Activated CD4-positive, alpha-beta T cell treated with anti-CD3 and anti-CD28 coated beads for 36 hours (primary cell): ENCODE measurements at regions of chr16 and their contacts with region 1.

Region 1: GRCh38 chr16:48623304-48624016 is 13.5 kb upstream of the N4BP1 start:
- DNase-seq: peak; percentile 90
- ATAC-seq: peak; percentile 97
- H3K4me3 Mint-ChIP-seq: peak overlapping the region; percentile 68
- H3K27ac Mint-ChIP-seq: peak overlapping the region; percentile 77
- H3K4me1 Mint-ChIP-seq: peaks cover 19% of the 10 kb centered on the region
- H3K27me3 Mint-ChIP-seq: no peaks in the 10 kb centered on the region

Region 2: GRCh38 chr16:48231727-48232492 is 391.6 kb before region 1 on chr16:
- CTCF ChIA-PET with region 1: interaction called, 12 read pairs
- POLR2A ChIA-PET with region 1: no interaction called
- intact Hi-C with region 1: loop called in 1 of 2 experiments (anchors 2 kb)
- DNase-seq: peak; percentile 72
- ATAC-seq: peak; percentile 83
- H3K4me3 Mint-ChIP-seq: peak overlapping the region; percentile 20
- H3K27ac Mint-ChIP-seq: peak overlapping the region; percentile 65
- H3K4me1 Mint-ChIP-seq: peaks cover 22% of the 10 kb centered on the region
- H3K27me3 Mint-ChIP-seq: peaks cover 5% of the 10 kb centered on the region

Region 3: GRCh38 chr16:48365581-48366164 is 257.8 kb before region 1 on chr16:
- CTCF ChIA-PET with region 1: interaction called, 25 read pairs
- POLR2A ChIA-PET with region 1: no interaction called
- intact Hi-C with region 1: loop called in 1 of 2 experiments (anchors 5 kb)
- DNase-seq: peak; percentile 93
- ATAC-seq: peak; percentile 96
- H3K4me3 Mint-ChIP-seq: peak overlapping the region; percentile 90
- H3K27ac Mint-ChIP-seq: peak overlapping the region; percentile 99
- H3K4me1 Mint-ChIP-seq: peaks cover 56% of the 10 kb centered on the region
- H3K27me3 Mint-ChIP-seq: no peaks in the 10 kb centered on the region

Region 4: DNA sequence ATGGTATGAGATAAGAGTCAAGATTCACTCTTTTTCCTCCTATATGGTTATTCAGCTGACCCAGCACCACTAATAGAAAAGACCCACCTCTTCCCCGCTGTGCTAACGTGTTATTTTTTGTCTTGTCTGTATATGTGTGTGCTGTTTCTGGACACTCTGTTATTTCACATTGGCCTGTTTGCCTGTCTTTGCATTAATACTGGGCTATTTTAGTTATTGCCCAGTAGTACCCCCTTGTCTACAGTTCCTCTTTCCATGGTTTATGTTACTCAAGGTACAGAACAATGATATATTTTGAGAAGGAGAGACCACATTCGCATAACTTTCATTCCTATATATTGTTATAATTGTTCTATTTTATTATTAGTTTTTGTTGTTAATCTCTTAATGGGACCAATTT is 164.3 kb before region 1 on chr16:
- CTCF ChIA-PET with region 1: interaction called, 8 read pairs
- POLR2A ChIA-PET with region 1: no interaction called
- intact Hi-C with region 1: loop called in 1 of 2 experiments (anchors 5 kb)
- DNase-seq: no peak
- ATAC-seq: no peak
- H3K4me3 Mint-ChIP-seq: no peak overlapping the region
- H3K27ac Mint-ChIP-seq: no peak overlapping the region
- H3K4me1 Mint-ChIP-seq: peaks cover 9% of the 10 kb centered on the region
- H3K27me3 Mint-ChIP-seq: peaks cover 35% of the 10 kb centered on the region

Region 5: DNA sequence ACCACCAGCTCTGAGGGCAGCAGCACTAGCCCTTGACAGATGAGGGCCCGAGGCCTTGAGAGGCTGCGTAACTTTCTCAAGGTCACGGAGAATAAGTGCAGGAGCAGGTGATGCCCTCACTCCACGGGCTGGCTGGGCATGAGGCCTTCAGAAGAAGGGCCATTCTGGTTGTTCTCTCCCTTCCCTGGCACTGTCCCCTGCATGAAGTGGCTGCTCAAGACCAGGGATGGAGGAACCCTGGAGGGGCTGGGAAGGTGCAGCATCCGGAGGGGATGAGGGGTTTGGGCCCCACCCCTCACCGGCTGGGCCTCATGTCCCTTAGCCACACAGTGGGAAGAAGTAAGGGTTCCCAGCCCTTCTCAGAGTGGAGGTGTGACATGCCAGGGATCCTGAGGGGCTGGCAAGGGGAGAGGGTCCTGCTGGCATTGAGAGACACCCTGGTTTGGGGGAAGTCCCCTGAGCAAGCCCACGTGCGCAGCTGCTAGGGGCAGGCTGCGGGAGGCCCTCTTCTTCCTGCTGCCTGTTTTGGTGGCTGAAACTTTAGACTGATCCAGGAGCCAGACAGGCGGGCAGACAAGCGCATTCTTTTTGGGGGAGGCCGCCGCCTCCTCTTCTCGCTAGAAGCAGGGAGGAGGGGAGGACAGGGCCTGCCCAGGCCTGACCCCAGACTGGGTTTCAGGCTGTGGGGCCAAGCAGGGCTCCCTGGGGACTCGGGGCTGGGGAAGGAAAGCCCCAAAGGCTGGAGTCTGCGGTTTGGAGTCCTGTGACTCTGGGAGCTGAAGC is 87.4 kb before region 1 on chr16:
- CTCF ChIA-PET with region 1: interaction called, 23 read pairs
- POLR2A ChIA-PET with region 1: no interaction called
- intact Hi-C with region 1: loop called in 1 of 2 experiments (anchors 5 kb)
- DNase-seq: peak; percentile 40
- ATAC-seq: peak; percentile 43
- H3K4me3 Mint-ChIP-seq: no peak overlapping the region
- H3K27ac Mint-ChIP-seq: no peak overlapping the region
- H3K4me1 Mint-ChIP-seq: peaks cover 16% of the 10 kb centered on the region
- H3K27me3 Mint-ChIP-seq: no peaks in the 10 kb centered on the region

Region 6: DNA sequence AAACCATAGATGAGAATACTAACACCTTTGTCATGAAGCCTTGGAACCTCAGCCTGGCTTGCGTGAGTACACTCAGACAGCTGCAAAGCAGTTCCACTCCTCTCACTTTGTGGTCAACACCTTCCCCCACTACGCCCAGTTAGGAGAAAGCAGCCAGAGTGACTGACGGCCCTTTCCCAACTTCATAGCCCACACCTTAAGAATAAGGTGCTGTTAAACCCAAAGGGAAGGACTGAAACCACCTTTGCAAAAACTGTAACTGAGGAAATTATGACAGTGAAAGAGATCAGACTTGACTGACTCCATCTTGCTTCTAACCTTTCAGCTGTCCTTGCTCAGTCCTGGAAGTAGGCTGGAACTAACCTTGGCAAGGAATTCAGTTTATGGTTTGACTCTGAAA is 27.1 kb before region 1 on chr16:
- CTCF ChIA-PET with region 1: interaction called, 10 read pairs
- POLR2A ChIA-PET with region 1: no interaction called
- intact Hi-C with region 1: no loop called
- DNase-seq: peak; percentile 76
- ATAC-seq: peak; percentile 90
- H3K4me3 Mint-ChIP-seq: no peak overlapping the region
- H3K27ac Mint-ChIP-seq: peak overlapping the region; percentile 82
- H3K4me1 Mint-ChIP-seq: peaks cover 53% of the 10 kb centered on the region
- H3K27me3 Mint-ChIP-seq: no peaks in the 10 kb centered on the region